CD4-positive, alpha-beta T cell (primary cell): ENCODE measurements at regions of chr2 and their contacts with region 1.

Region 1: DNA sequence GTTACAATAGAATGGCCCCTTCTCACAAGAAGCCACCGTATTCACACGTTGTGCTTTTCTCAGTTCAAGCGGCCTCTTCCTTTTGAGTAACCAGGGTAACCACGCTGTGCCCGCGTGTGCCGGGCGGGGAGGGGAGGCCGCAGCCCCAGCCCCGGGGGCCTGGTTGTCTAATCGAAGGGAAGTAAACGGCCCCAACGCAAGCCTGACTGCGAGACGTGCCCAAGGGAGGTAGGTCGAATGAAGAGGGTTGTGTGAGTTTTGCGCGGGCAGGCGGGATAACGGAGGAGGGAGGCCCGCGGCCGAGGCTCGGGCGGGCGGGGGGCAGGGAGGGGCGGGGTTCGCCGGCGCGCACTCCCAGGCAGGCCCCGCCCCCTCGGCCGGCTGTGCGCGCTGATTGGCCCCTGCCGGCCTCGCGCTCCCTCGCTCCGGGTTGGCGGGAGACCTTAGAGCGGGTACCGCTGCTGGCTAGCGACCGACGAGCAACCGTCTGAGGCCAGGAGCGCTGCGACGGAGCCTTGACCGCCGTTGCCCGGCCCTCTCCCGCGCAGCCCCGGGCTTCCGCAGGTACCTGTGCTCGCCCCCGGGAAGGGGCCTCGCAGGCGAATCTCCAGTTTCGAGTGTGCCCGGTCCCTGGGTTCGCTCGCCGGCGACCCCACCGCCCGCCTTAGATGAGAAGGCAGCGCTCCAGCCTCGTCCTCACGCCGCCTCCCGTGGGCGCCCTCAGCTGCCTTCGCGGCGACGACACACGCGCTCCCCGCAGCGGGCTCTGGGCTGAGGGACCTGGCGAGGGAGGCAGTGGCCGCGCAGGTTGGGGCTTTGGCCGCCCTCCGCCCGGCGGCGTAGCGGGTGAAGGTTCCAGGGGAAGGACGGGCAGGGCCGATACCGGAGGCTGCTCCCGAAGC is at the start of gene SPDYA:
- DNase-seq: peak; percentile 55 to 91 (median 74)
- ATAC-seq: peak; percentile 91
- H3K4me3 ChIP-seq: peak within 1 kb of the TSS; percentile 66
- H3K4me3 Mint-ChIP-seq: peak within 1 kb of the TSS; percentile 93
- H3K27ac ChIP-seq: no peak within 1 kb of the TSS
- H3K27ac Mint-ChIP-seq: peak within 1 kb of the TSS; percentile 74
- H3K4me1 ChIP-seq: peaks cover 16% of the 10 kb centered on the region
- H3K4me1 Mint-ChIP-seq: peaks cover 22% of the 10 kb centered on the region
- H3K27me3 ChIP-seq: no peaks in the 10 kb centered on the region
- H3K27me3 Mint-ChIP-seq: no peaks in the 10 kb centered on the region
- CTCF ChIP-seq: no peak
- total RNA-seq, gene SPDYA: 12.7 to 12.8 TPM

Region 2: GRCh38 chr2:28894470-28895177 is 84.0 kb after region 1 on chr2 and contains the start of gene WDR43:
- CTCF ChIA-PET with region 1: no interaction called
- POLR2A ChIA-PET with region 1: interaction called, 4 read pairs
- intact Hi-C with region 1: loop called in 1 of 2 experiments (anchors 5 kb)
- DNase-seq: peak; percentile 90 to 99 (median 97)
- ATAC-seq: peak; percentile 97
- H3K4me3 ChIP-seq: peak within 1 kb of the TSS; percentile 89
- H3K4me3 Mint-ChIP-seq: peak within 1 kb of the TSS; percentile 97
- H3K27ac ChIP-seq: peak within 1 kb of the TSS; percentile 55 to 59
- H3K27ac Mint-ChIP-seq: peak within 1 kb of the TSS; percentile 91
- H3K4me1 ChIP-seq: peaks cover 24% of the 10 kb centered on the region
- H3K4me1 Mint-ChIP-seq: peaks cover 49% of the 10 kb centered on the region
- H3K27me3 ChIP-seq: no peaks in the 10 kb centered on the region
- H3K27me3 Mint-ChIP-seq: no peaks in the 10 kb centered on the region
- CTCF ChIP-seq: no peak
- total RNA-seq, gene WDR43: 62.4 to 73.2 TPM